ENCODE measurements at regions of chr15 and their contacts with region 1.

Region 1: DNA sequence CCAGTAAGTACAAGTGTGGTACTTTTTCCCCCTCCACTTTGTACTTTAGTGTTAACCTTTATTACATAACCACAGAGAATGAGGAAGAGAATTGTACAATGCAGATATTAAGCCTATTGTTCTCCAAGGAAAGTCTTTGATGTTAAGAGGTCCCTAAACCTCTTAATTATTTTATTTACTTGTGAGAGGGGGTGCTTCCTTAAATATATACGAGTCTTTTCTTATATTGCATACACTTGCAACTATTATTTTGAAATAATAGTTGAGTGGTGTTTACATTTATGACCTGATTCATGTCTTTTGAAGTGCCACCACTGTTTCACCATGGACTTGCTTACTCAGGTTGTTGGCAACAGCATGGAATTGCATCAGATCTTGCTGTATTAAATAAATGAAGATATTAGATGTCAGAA is 10.1 kb downstream of the USP3 start:
- DNase-seq: peak; percentile 28
- H3K4me3 Mint-ChIP-seq: no peak overlapping the region
- H3K27ac Mint-ChIP-seq: peak overlapping the region; percentile 57
- H3K4me1 Mint-ChIP-seq: peaks cover 80% of the 10 kb centered on the region
- H3K27me3 Mint-ChIP-seq: no peaks in the 10 kb centered on the region
- CTCF ChIP-seq: no peak

Region 2: GRCh38 chr15:63582718-63583426 is 68.3 kb after region 1 on chr15:
- CTCF ChIA-PET with region 1: interaction called, 4 read pairs
- intact Hi-C with region 1: loop called (anchors 2 kb)
- DNase-seq: no peak
- H3K4me3 Mint-ChIP-seq: no peak overlapping the region
- H3K27ac Mint-ChIP-seq: peak overlapping the region; percentile 8
- H3K4me1 Mint-ChIP-seq: peaks cover 10% of the 10 kb centered on the region
- H3K27me3 Mint-ChIP-seq: no peaks in the 10 kb centered on the region
- CTCF ChIP-seq: no peak

Measured in Calu3 (cell line).